ENCODE measurements at regions of chr18 and their contacts with region 1.

Region 1: GRCh38 chr18:3313685-3314084 is 51.8 kb downstream of the MYL12B start:
- DNase-seq: no peak
- H3K4me3 ChIP-seq: no peak overlapping the region
- H3K27ac ChIP-seq: no peak overlapping the region
- H3K4me1 ChIP-seq: no peaks in the 10 kb centered on the region
- H3K27me3 ChIP-seq: no peaks in the 10 kb centered on the region
- CTCF ChIP-seq: no peak
- EP300 ChIP-seq: no peak
- POLR2A ChIP-seq: no peak

Region 2: GRCh38 chr18:4789506-4789905 is 1475.8 kb after region 1 on chr18:
- intact Hi-C with region 1: loop called in 1 of 4 experiments (anchors 5 kb)
- DNase-seq: no peak
- H3K4me3 ChIP-seq: no peak overlapping the region
- H3K27ac ChIP-seq: no peak overlapping the region
- H3K4me1 ChIP-seq: no peaks in the 10 kb centered on the region
- H3K27me3 ChIP-seq: no peaks in the 10 kb centered on the region
- CTCF ChIP-seq: no peak
- EP300 ChIP-seq: no peak
- POLR2A ChIP-seq: no peak

Measured in ovary (tissue), 10 donors.